ENCODE measurements at regions of chr7 and their contacts with region 1.

Region 1: GRCh38 chr7:101138213-101138870 is 11.4 kb downstream of the SERPINE1 start:
- DNase-seq: peak; percentile 83 to 88 (median 86)
- ATAC-seq: peak; percentile 86 to 97
- H3K4me3 ChIP-seq: no peak overlapping the region
- H3K27ac ChIP-seq: no peak overlapping the region
- H3K4me1 ChIP-seq: peaks cover 2% of the 10 kb centered on the region
- H3K27me3 ChIP-seq: no peaks in the 10 kb centered on the region

Region 2: DNA sequence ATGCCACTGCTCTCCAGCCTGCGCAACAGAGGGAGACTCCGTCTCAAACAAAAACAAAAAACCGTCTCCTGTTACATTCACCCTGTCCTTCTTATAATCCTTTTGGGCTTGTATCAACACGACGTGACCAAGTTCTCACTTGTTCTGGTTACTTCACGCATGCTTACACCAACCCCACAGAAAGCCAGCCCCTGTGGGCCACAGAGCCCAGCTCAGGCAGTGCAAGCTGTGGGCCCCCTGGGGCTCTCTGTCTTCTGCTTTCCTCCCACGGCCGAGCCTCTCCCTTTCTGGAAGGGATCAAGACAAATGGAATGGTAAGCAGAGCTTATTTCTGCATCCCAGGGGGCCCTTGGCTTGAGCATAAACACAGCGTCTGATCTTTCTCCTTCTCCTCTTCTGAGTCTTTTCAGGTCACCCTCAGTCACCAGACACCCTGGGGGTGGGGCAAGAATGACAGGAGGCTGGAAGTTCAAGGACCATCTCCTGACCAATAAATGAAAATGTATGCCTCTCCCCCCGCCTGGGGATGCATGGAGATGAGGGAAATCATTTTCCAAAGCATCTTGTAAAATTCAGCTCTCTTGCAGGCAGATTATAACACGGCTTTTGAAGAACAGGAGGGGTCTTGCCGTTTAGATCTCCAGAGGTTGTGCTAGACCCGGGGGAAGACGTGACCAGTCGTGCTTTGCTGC is 72.1 kb before region 1 on chr7:
- intact Hi-C with region 1: no loop called
- DNase-seq: no peak
- ATAC-seq: no peak
- H3K4me3 ChIP-seq: no peak overlapping the region
- H3K27ac ChIP-seq: no peak overlapping the region
- H3K4me1 ChIP-seq: no peaks in the 10 kb centered on the region
- H3K27me3 ChIP-seq: no peaks in the 10 kb centered on the region

Region 3: GRCh38 chr7:101077303-101078089 is 60.8 kb before region 1 on chr7:
- intact Hi-C with region 1: loop called in 2 of 4 experiments (anchors 5 to 10 kb)
- DNase-seq: peak; percentile 76 to 88 (median 80)
- ATAC-seq: peak; percentile 87 to 92
- H3K4me3 ChIP-seq: no peak overlapping the region
- H3K27ac ChIP-seq: no peak overlapping the region
- H3K4me1 ChIP-seq: no peaks in the 10 kb centered on the region
- H3K27me3 ChIP-seq: no peaks in the 10 kb centered on the region

Region 4: GRCh38 chr7:101085162-101085987 is 53.0 kb before region 1 on chr7 and contains the start of gene TRIM56:
- intact Hi-C with region 1: loop called in 2 of 4 experiments (anchors 5 to 10 kb)
- DNase-seq: peak; percentile 90 to 95 (median 94)
- ATAC-seq: peak; percentile 95 to 96
- H3K4me3 ChIP-seq: peak within 1 kb of the TSS; percentile 56
- H3K27ac ChIP-seq: peak within 1 kb of the TSS; percentile 77
- H3K4me1 ChIP-seq: peaks cover 4% of the 10 kb centered on the region
- H3K27me3 ChIP-seq: no peaks in the 10 kb centered on the region
- total RNA-seq, gene TRIM56: 20.0 to 24.5 (median 22.3) TPM

Region 5: GRCh38 chr7:101099969-101100781 is 38.2 kb before region 1 on chr7:
- intact Hi-C with region 1: loop called in 2 of 4 experiments (anchors 5 kb)
- DNase-seq: peak; percentile 94 to 97 (median 96)
- ATAC-seq: peak; percentile 96
- H3K4me3 ChIP-seq: no peak overlapping the region
- H3K27ac ChIP-seq: peak overlapping the region; percentile 88
- H3K4me1 ChIP-seq: peaks cover 8% of the 10 kb centered on the region
- H3K27me3 ChIP-seq: no peaks in the 10 kb centered on the region

Region 6: DNA sequence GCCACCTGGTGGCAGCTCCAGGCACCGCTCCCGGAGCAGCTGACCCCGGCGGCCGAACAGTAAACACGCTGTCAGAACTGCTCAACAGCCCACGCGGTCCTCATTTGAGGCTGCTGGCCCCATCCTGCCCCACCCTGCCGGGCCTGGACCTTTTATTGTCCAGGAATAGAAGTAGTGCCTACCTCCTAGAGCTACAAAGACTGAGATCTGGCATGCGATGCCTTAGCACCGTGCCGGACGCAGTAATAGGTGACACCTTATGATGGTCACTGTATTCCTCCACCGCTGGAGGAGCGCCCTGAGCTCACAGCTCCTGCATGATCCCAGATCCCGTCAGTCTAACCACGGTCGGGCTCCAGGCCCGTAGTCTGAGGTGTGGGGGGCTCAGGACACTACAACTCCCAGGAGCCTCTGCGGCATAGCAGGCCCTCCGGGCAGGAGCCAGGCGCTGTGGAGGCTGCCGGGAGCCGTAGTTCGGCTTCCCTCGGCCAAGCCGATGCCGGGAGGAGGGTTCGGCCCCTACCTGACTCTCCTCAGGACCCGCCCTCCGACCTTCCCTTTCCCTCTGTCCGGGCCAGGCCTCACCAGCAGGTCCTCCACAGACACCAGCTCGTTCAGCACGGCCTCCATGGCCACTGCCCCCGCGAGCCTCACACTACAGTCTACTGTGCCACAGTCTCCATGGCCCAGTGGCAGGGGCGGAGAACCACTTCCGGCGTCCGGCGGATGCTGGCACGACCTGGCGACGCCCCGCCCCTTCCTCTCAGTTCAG is 106.2 kb after region 1 on chr7 and contains the start of gene FIS1:
- intact Hi-C with region 1: no loop called
- DNase-seq: peak; percentile 95 to 98 (median 98)
- ATAC-seq: peak; percentile 98
- H3K4me3 ChIP-seq: peak within 1 kb of the TSS; percentile 73
- H3K27ac ChIP-seq: peak within 1 kb of the TSS; percentile 94
- H3K4me1 ChIP-seq: no peaks in the 10 kb centered on the region
- H3K27me3 ChIP-seq: no peaks in the 10 kb centered on the region
- total RNA-seq, gene FIS1: 245 to 315 (median 279) TPM

Region 7: GRCh38 chr7:101265622-101266516 is 127.5 kb after region 1 on chr7:
- intact Hi-C with region 1: no loop called
- DNase-seq: no peak
- ATAC-seq: no peak
- H3K4me3 ChIP-seq: no peak overlapping the region
- H3K27ac ChIP-seq: no peak overlapping the region
- H3K4me1 ChIP-seq: no peaks in the 10 kb centered on the region
- H3K27me3 ChIP-seq: no peaks in the 10 kb centered on the region

Region 8: DNA sequence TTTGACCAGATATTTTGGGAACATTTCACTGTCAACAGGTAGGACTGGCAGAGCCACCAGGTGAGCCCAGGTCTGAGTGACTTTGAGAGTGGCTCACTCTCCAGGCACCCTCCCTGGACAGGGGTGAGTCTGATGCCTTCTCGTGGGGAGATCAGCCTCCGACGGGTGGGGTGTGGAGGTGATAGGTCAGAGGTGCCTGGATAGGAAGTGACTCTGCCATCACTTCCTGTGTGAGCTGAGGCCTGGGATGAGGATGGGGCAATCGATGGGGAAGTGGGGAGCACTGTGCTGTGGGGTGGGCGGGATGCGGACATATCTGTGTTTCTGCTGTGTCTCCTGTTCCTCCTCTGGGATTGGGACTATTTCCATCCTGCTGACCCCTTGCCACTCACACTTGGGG is 148.7 kb after region 1 on chr7:
- intact Hi-C with region 1: loop called in 3 of 4 experiments (anchors 5 kb)
- DNase-seq: no peak
- ATAC-seq: no peak
- H3K4me3 ChIP-seq: no peak overlapping the region
- H3K27ac ChIP-seq: no peak overlapping the region
- H3K4me1 ChIP-seq: no peaks in the 10 kb centered on the region
- H3K27me3 ChIP-seq: no peaks in the 10 kb centered on the region